HepG2 (cell line): ENCODE measurements at regions of chrX and their contacts with region 1.

Region 1: DNA sequence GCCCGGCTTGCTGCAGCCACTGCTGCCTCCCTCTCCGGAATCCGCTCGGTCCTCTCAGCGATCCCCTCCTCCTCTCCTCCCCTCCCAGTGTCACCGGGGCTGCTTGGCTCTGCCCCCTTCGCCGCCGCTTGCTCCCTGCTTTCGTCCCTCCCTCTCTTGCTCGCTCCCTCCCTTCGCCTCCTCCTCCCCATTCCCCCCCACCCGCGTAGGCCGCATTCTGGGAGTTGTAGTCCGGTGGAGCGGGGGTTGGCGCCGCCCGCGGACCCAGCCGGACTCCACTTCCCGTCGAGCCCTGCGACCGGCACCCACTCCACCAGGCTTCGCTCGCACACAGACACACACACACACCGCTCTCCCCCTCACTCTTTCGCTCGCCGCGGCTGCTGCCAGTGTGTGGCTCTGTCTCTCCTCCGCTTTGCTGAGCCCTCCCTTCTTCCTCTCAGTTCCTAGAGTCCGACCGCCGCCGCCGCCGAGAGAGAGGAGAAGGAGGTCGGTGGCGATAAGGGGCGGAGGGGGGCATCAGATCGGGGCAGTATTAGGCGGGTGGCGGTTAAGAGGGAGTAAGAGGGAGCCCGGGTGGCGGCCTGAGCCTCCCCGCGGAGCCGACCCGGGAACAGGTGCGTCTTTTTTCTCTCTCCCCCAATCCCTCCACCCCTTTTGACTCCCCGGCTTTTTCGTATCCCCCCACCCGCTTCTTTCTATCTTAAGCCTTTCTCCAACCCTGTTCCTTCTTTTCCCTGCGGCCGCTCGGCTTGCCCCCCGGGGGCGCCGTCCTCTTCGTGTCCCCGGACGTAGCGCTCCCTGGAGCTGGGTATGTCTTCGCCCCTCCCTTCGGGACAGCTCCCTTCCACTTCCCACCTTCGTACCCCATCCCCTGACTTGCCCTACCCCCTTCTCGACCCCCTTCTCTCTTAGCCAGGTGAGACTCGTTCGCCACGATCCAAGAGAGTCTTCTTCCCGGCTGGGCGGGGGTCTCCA is at the start of gene BCORL1:
- DNase-seq: peak; percentile 75
- ATAC-seq: peak; percentile 85
- H3K4me3 ChIP-seq: peak within 1 kb of the TSS in 2 of 3 experiments; percentile 45 to 66; a peak in 4 of 6 replicates
- H3K27ac ChIP-seq: no peak within 1 kb of the TSS
- H3K4me1 ChIP-seq: peaks cover 9% of the 10 kb centered on the region
- H3K27me3 ChIP-seq: no peaks in the 10 kb centered on the region
- CTCF ChIP-seq: no peak
- EP300 ChIP-seq: no peak
- POLR2A ChIP-seq: peak in 1 of 2 experiments; percentile 78; a peak in 2 of 4 replicates
- RAD21 ChIP-seq: no peak
- total RNA-seq, gene BCORL1: 1.4 and 4.1 TPM in 2 replicates

Region 2: GRCh38 chrX:129845616-129846190 is 136.9 kb before region 1 on chrX:
- CTCF ChIA-PET with region 1: no interaction called
- POLR2A ChIA-PET with region 1: no interaction called
- in situ Hi-C with region 1: no loop called
- intact Hi-C with region 1: no loop called
- DNase-seq: no peak
- ATAC-seq: peak; percentile 4; the same call in 1 of the 3 replicates
- H3K4me3 ChIP-seq: no peak overlapping the region
- H3K27ac ChIP-seq: no peak overlapping the region
- H3K4me1 ChIP-seq: peaks cover 35% of the 10 kb centered on the region
- H3K27me3 ChIP-seq: no peaks in the 10 kb centered on the region
- CTCF ChIP-seq: no peak
- EP300 ChIP-seq: no peak
- POLR2A ChIP-seq: no peak
- RAD21 ChIP-seq: no peak

Region 3: GRCh38 chrX:129931411-129932015 is 51.0 kb before region 1 on chrX:
- CTCF ChIA-PET with region 1: no interaction called
- POLR2A ChIA-PET with region 1: no interaction called
- in situ Hi-C with region 1: no loop called
- intact Hi-C with region 1: loop called (anchors 5 kb)
- DNase-seq: peak; percentile 62
- ATAC-seq: peak; percentile 76
- H3K4me3 ChIP-seq: peak overlapping the region; percentile 34 to 65 (median 57); a peak in 4 of 6 replicates
- H3K27ac ChIP-seq: peak overlapping the region; percentile 64
- H3K4me1 ChIP-seq: 0 out of 2 replicates have a peak, but pooled peaks cover 5% of the 10 kb centered on the region
- H3K27me3 ChIP-seq: peaks cover 0 to 9% of the 10 kb centered on the region in 2 experiments; a peak in 3 of 5 replicates
- CTCF ChIP-seq: peak; percentile 17; the same call in 1 of the 2 replicates
- EP300 ChIP-seq: no peak
- POLR2A ChIP-seq: peak in 1 of 2 experiments; percentile 34; a peak in 1 of 4 replicates
- RAD21 ChIP-seq: no peak

Region 4: DNA sequence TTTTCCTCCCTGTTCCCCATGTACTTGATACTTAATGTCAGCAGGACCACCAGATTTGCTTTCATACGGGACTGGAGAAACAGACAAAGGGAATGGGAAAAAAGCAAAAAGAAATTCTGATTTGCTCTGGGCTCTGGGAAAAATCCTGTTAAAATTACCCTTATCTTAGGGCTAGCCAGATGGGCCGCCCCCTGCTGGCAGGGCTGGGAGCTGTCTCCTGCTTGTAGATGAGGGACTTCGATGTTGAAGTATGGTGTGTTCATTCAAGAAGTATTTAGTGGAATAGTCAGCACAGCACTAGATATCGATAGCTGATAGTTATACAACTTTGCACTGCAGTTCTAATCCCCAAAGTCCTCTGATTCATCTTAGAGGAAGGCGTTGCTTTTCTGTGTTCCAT is 45.6 kb after region 1 on chrX:
- CTCF ChIA-PET with region 1: no interaction called
- POLR2A ChIA-PET with region 1: no interaction called
- in situ Hi-C with region 1: no loop called
- intact Hi-C with region 1: loop called (anchors 2 kb)
- DNase-seq: no peak
- ATAC-seq: peak; percentile 56; the same call in 1 of the 3 replicates
- H3K4me3 ChIP-seq: no peak overlapping the region
- H3K27ac ChIP-seq: no peak overlapping the region
- H3K4me1 ChIP-seq: no peaks in the 10 kb centered on the region
- H3K27me3 ChIP-seq: no peaks in the 10 kb centered on the region
- CTCF ChIP-seq: peak; percentile 59
- EP300 ChIP-seq: no peak
- POLR2A ChIP-seq: no peak
- RAD21 ChIP-seq: no peak